ENCODE measurements at regions of chr10 and their contacts with region 1.

Region 1: DNA sequence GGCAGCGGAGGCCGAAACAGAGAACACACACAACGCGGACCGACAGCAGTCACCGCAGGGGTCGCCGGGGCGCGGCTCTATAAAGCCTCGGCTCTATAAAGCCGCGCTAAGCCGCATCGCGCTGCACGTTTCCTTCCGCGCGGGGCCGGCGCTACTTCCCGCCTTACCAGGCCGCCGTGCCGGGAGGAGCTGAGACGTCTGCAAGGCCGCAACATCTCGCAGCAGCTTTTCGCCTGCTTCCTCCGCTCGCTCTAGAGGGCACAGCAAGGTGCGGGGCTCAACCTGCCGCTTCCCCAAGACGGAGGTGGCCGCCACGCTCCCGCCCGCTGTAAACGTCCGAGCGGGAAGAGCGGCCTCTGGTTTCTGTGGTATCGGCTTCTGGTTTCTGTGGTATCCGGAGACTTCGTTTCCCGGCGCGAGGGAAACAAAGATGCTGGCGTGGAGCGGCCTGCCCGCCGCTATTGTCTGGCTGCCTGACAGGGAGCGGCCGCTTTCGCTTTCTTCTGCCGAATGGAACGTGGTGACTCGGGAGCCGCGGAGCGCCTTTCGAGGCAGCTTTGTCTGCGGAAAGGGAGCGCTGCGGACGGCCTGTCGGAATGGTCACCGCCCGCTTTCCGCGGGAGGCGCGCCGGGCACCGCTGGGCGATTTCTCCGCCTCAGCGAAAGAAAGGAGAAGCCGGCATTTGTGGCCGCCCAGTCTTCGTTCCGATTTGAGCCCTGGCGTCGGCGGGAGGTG is 91.8 kb downstream of the SPAG6 start:
- DNase-seq: peak; percentile 88
- ATAC-seq: peak; percentile 88
- H3K4me3 Mint-ChIP-seq: peak overlapping the region; percentile 94
- H3K27ac Mint-ChIP-seq: peak overlapping the region; percentile 96
- H3K4me1 Mint-ChIP-seq: peaks cover 36% of the 10 kb centered on the region
- H3K27me3 Mint-ChIP-seq: no peaks in the 10 kb centered on the region
- CTCF ChIP-seq: no peak

Region 2: GRCh38 chr10:21533467-21534279 is 903.4 kb before region 1 on chr10 and contains the start of gene MLLT10:
- CTCF ChIA-PET with region 1: no interaction called
- POLR2A ChIA-PET with region 1: interaction called, 4 read pairs
- intact Hi-C with region 1: loop called (anchors 2 kb)
- DNase-seq: peak; percentile 94
- ATAC-seq: peak; percentile 88
- H3K4me3 Mint-ChIP-seq: peak within 1 kb of the TSS; percentile 90
- H3K27ac Mint-ChIP-seq: peak within 1 kb of the TSS; percentile 92
- H3K4me1 Mint-ChIP-seq: peaks cover 18% of the 10 kb centered on the region
- H3K27me3 Mint-ChIP-seq: peaks cover 2% of the 10 kb centered on the region
- CTCF ChIP-seq: no peak
- total RNA-seq, gene MLLT10: 40.6 and 48.7 TPM in 2 replicates

Region 3: DNA sequence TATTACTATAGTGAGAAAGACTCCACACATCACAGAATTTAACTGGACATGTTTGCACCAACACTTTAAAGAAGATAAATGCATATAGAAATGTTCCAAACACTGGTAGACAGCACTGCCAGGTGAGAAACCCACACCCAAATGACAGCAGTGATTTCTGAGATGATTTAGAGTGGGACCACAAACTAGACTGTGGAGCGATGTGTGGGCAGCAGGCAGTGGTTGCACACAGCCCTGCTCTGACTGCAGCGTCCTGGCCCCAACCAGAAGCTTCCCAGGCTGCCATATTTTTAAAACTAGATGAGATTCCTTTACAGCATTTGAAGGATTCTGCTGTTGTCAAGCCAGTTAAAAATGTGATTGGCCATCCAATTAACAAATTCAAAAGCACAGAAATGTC is 168.5 kb before region 1 on chr10:
- CTCF ChIA-PET with region 1: no interaction called
- POLR2A ChIA-PET with region 1: no interaction called
- intact Hi-C with region 1: no loop called
- DNase-seq: no peak
- ATAC-seq: no peak
- H3K4me3 Mint-ChIP-seq: no peak overlapping the region
- H3K27ac Mint-ChIP-seq: no peak overlapping the region
- H3K4me1 Mint-ChIP-seq: no peaks in the 10 kb centered on the region
- H3K27me3 Mint-ChIP-seq: peaks cover 26% of the 10 kb centered on the region
- CTCF ChIP-seq: no peak

Region 4: DNA sequence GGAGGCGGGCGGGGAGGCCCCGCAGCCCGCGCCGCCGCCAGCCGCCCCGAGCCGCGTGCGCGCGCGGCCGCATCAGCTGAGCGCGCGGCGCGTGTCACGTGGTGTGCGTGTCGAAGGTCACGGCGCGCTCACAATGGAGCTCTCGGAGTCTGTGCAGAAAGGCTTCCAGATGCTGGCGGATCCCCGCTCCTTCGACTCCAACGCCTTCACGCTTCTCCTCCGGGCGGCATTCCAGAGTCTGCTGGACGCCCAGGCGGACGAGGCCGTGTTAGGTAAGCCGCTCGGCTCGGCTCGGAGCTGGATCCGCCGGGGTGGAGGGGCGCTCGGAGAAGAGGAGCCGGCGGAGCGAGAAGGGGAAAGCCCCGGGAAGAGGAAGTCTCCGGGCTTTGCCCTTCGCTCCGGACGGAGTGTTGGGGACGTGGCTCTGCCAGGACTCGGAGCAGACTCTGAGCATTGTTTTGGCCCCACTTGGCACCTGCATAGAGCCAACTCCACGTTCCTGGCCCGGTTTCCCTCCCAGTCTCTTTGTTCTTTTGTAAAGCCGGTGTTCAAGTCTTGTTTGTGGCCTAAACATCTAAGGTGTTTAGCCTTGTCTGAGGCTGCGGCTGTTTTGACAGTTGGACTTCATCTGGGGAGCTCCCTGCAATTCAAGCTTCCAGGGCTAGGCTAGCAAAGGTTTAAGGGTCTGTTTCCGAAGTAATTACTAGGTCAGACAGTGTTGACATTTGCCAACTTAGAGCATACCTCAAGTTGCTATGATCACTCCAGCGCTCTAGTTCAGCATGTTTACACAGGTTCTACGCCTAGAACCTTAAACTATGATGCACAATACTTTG is 120.5 kb before region 1 on chr10 and contains the start of gene COMMD3:
- CTCF ChIA-PET with region 1: interaction called, 8 read pairs
- POLR2A ChIA-PET with region 1: interaction called, 71 read pairs
- intact Hi-C with region 1: loop called (anchors 1 kb)
- DNase-seq: peak; percentile 86
- ATAC-seq: peak; percentile 65
- H3K4me3 Mint-ChIP-seq: peak within 1 kb of the TSS; percentile 97
- H3K27ac Mint-ChIP-seq: peak within 1 kb of the TSS; percentile 98
- H3K4me1 Mint-ChIP-seq: peaks cover 40% of the 10 kb centered on the region
- H3K27me3 Mint-ChIP-seq: no peaks in the 10 kb centered on the region
- CTCF ChIP-seq: no peak
- total RNA-seq, gene COMMD3: 68.2 and 72.8 TPM in 2 replicates

Region 5: DNA sequence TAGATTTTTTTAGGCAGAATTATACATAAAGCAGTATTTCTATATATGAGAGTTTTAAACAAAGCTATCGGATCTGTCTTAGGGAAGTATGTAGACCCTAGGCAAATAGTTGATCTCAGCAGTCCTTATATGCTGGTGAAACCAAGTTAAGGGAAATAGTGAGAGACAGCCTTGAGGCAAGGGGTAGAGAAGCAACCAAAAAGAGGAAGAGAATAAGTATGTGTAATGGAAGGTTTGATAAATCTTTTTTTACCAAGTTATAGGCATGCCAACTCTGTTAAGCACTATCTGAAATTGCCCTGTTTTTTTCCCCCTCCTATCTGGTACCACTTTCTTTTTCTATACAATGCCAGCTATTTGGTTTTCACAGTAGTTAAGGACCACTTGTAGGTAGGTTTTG is 71.8 kb before region 1 on chr10:
- CTCF ChIA-PET with region 1: no interaction called
- POLR2A ChIA-PET with region 1: interaction called, 7 read pairs
- intact Hi-C with region 1: loop called (anchors 1 kb)
- DNase-seq: no peak
- ATAC-seq: peak; percentile 83
- H3K4me3 Mint-ChIP-seq: no peak overlapping the region
- H3K27ac Mint-ChIP-seq: peak overlapping the region; percentile 57
- H3K4me1 Mint-ChIP-seq: peaks cover 29% of the 10 kb centered on the region
- H3K27me3 Mint-ChIP-seq: no peaks in the 10 kb centered on the region
- CTCF ChIP-seq: no peak

Region 6: GRCh38 chr10:22475651-22476600 is 38.9 kb after region 1 on chr10:
- CTCF ChIA-PET with region 1: no interaction called
- POLR2A ChIA-PET with region 1: interaction called, 10 read pairs
- intact Hi-C with region 1: loop called (anchors 1 kb)
- DNase-seq: peak; percentile 36
- ATAC-seq: peak; percentile 62
- H3K4me3 Mint-ChIP-seq: peak overlapping the region; percentile 87
- H3K27ac Mint-ChIP-seq: no peak overlapping the region
- H3K4me1 Mint-ChIP-seq: peaks cover 24% of the 10 kb centered on the region
- H3K27me3 Mint-ChIP-seq: peaks cover 47% of the 10 kb centered on the region
- CTCF ChIP-seq: no peak

Region 7: DNA sequence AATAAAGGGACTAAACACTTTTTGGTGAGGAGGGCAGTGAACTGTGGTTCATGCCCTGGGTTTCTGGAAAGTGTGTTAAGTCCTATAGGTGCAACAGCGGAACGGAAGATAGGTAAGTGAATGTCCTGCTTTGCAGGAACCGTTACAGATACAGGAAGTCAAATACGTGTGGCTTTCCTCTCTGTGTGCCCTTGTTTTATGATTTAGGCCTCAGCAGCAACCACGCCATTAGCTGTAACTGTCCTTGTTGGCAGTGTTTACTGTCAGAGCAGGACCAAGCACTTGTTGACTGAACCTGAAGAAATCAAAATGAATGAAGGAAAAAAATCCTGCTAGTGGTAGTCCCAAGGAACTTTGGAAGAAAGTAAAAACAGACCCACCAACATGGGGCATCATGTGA is 127.0 kb after region 1 on chr10:
- CTCF ChIA-PET with region 1: no interaction called
- POLR2A ChIA-PET with region 1: no interaction called
- intact Hi-C with region 1: no loop called
- DNase-seq: no peak
- ATAC-seq: no peak
- H3K4me3 Mint-ChIP-seq: no peak overlapping the region
- H3K27ac Mint-ChIP-seq: peak overlapping the region; percentile 3
- H3K4me1 Mint-ChIP-seq: peaks cover 17% of the 10 kb centered on the region
- H3K27me3 Mint-ChIP-seq: no peaks in the 10 kb centered on the region
- CTCF ChIP-seq: no peak

Region 8: GRCh38 chr10:22988581-22989360 is 551.7 kb after region 1 on chr10:
- CTCF ChIA-PET with region 1: interaction called, 8 read pairs
- POLR2A ChIA-PET with region 1: interaction called, 3 read pairs
- intact Hi-C with region 1: loop called (anchors 2 kb)
- DNase-seq: peak; percentile 28
- ATAC-seq: peak; percentile 70
- H3K4me3 Mint-ChIP-seq: no peak overlapping the region
- H3K27ac Mint-ChIP-seq: peak overlapping the region; percentile 10
- H3K4me1 Mint-ChIP-seq: peaks cover 8% of the 10 kb centered on the region
- H3K27me3 Mint-ChIP-seq: peaks cover 11% of the 10 kb centered on the region
- CTCF ChIP-seq: peak; percentile 37

Measured in activated B cell treated with CpG ODN at 0.5 μM for 24 hours (primary cell).